Activated naive CD4-positive, alpha-beta T cell treated with anti-CD3 and anti-CD28 coated beads for 36 hours (primary cell): ENCODE measurements at regions of chr12 and their contacts with region 1.

Region 1: DNA sequence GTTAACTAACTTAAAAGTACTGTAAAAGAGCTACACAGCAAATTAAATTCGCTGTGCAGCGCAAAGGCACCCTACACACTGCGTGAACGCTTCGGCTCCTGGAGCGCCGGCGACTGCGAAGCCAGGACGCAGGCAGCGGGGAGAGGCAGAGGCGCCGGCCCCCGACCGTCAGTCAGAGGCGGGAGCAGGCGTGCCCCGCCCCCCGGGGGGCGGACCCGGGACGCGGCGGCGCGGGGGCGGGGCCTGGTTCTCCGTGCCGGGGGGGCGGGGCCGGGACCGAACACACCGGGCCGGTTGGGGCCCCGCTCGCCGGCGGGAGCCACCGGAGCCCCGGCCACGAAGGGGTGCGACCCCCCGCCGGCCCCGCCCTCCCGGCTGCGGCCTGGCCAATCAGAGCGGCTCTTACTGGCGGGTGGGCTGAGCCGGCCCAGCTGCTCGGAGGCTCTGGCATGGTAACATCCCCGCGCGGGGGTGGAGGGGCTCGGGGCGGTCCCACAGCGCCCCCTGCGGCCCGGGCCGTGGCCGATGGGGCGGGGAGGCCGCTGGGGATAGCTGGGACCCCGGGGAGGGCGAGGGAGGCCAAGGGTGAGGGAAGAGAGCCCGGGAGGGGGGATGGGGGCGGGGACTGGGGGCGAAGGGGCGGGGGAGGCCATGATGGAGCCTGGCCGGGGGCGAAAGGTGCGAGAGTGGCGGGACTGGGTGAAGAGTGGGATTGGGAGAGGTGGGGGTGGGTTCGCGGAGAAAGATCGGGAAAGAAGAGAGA is at the start of gene PRPF40B:
- DNase-seq: peak; percentile 85
- H3K4me3 Mint-ChIP-seq: peak within 1 kb of the TSS; percentile 79
- H3K27ac Mint-ChIP-seq: peak within 1 kb of the TSS; percentile 76
- H3K4me1 Mint-ChIP-seq: peaks cover 20% of the 10 kb centered on the region
- H3K27me3 Mint-ChIP-seq: peaks cover 12% of the 10 kb centered on the region
- total RNA-seq, gene PRPF40B: 7.2 to 7.7 TPM

Region 2: GRCh38 chr12:49322708-49323523 is 300.4 kb before region 1 on chr12 and contains the start of gene TROAP:
- CTCF ChIA-PET with region 1: no interaction called
- intact Hi-C with region 1: loop called (anchors 1 kb)
- DNase-seq: peak; percentile 99
- H3K4me3 Mint-ChIP-seq: peak within 1 kb of the TSS; percentile 98
- H3K27ac Mint-ChIP-seq: peak within 1 kb of the TSS; percentile 91
- H3K4me1 Mint-ChIP-seq: peaks cover 17% of the 10 kb centered on the region
- H3K27me3 Mint-ChIP-seq: no peaks in the 10 kb centered on the region
- total RNA-seq, gene TROAP: 67.4 to 68.8 TPM

Region 3: DNA sequence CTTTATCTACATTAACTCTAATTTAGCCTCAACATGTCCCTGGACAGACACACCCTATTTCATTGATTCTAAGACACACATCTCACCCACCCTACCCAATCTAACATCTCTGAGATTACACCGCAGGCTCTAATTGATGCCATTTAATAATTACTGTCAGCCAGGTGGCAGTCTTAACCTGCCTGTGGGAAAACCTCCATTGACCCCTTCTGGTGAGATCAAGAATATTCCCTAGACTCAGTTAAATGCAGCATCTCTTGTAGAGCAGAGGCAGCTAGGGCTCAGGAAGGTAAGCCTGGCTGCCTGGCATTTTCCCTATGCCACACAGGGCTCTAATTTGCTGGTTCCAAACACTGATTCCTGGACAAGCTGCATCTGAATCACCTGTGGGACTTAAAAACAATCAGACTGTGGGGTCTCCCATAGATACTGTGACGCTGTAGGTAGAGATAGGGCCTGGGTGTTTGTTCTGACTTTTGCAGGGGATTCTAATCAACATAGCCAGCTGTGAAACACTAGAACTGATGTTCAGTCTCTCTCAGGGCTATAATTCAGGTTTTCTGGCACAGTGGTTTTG is 69.7 kb before region 1 on chr12:
- CTCF ChIA-PET with region 1: interaction called, 3 read pairs
- intact Hi-C with region 1: loop called (anchors 1 kb)
- DNase-seq: peak; percentile 29
- H3K4me3 Mint-ChIP-seq: no peak overlapping the region
- H3K27ac Mint-ChIP-seq: no peak overlapping the region
- H3K4me1 Mint-ChIP-seq: peaks cover 4% of the 10 kb centered on the region
- H3K27me3 Mint-ChIP-seq: no peaks in the 10 kb centered on the region

Region 4: DNA sequence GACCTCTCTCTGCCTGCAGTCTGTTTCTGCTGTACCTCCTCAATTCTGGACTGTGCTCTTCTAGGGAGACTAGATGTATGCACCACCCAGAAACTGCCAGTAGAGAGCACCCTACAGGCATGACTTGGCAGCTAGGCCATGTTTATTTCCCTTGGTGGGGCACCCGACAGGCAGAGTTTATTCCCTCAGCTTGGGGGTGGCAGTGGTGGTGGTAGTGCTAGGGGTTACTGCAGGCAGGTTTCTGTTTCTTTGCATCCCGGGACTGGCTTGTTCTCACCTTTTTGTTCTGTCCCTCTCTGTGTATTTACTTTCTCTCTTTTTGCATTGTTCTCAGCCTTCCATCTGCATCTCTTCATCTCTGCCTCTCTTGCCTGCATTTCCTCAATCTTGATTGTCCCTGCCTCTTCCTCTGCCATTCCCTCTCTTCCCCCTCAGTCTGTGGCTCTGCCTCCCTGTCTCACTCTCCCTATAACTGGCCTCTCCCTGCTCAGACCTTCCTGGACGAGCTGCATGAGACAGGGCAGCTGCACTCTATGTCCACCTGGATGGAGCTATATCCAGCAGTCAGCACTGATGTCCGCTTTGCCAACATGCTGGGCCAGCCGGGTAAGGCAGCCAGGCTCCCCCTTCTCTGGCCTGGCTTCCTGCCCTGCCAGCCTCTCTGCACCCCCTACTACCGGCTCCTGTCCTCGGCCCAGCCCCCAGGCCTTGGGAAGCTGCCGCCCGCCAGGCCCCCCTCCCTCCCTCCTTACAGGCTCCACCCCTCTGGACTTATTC is 13.8 kb after region 1 on chr12:
- CTCF ChIA-PET with region 1: interaction called, 44 read pairs
- intact Hi-C with region 1: no loop called
- DNase-seq: peak; percentile 80
- H3K4me3 Mint-ChIP-seq: no peak overlapping the region
- H3K27ac Mint-ChIP-seq: no peak overlapping the region
- H3K4me1 Mint-ChIP-seq: peaks cover 14% of the 10 kb centered on the region
- H3K27me3 Mint-ChIP-seq: no peaks in the 10 kb centered on the region

Region 5: GRCh38 chr12:49750027-49750995 is 127.0 kb after region 1 on chr12:
- CTCF ChIA-PET with region 1: no interaction called
- intact Hi-C with region 1: loop called (anchors 1 kb)
- DNase-seq: peak; percentile 87
- H3K4me3 Mint-ChIP-seq: peak overlapping the region; percentile 40
- H3K27ac Mint-ChIP-seq: peak overlapping the region; percentile 94
- H3K4me1 Mint-ChIP-seq: peaks cover 83% of the 10 kb centered on the region
- H3K27me3 Mint-ChIP-seq: no peaks in the 10 kb centered on the region

Region 6: GRCh38 chr12:50390284-50390683 is 767.0 kb after region 1 on chr12:
- CTCF ChIA-PET with region 1: no interaction called
- intact Hi-C with region 1: no loop called
- DNase-seq: no peak
- H3K4me3 Mint-ChIP-seq: no peak overlapping the region
- H3K27ac Mint-ChIP-seq: no peak overlapping the region
- H3K4me1 Mint-ChIP-seq: no peaks in the 10 kb centered on the region
- H3K27me3 Mint-ChIP-seq: no peaks in the 10 kb centered on the region